ENCODE measurements at regions of chr17 and their contacts with region 1.

Region 1: DNA sequence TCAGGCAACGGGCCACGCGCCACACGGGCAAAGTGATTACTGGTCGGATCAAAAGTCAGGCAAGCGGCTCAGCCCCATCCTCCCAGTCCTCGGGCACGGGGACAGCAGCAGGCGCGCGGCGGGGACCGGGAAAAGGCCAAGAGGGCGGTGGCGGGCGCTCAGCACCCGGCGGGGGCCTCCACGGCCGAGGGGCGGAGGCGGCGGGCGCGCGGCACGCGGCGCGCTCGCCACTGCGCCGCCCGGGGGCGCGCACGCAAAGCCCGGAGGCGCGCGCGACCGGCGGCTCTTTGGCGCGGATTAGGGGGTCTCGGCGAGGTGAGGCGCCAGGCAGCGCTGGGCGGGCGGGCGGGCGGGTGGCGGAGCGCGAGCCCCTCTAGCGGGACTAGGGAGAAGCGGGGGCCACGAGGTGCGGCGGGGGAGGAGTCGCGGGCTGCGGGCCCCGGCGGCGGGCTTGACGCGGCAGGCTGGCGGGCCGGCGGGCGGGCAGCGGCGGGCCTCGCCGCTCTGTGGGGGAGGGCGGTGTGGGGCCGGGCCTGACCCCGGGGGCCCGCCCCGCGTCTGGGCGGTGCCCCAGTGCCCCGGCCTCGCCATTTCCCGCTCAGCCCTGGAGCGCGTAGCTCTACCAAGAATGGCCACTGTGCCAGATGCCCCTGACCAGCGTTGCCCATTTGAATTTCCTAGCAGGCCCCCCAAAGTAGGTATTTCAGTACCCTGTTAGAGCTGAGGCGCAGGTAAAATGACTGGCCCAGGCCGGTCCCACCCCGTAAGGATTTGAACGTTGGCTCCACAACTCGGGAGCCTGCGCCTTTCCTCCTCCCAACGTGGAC is at the starts of genes ACACA and TADA2A:
- DNase-seq: peak; percentile 48 to 73
- ATAC-seq: peak; percentile 84 to 86
- H3K4me3 ChIP-seq: peak within 1 kb of the TSS; percentile 85 to 95 (median 92)
- H3K27ac ChIP-seq: peak within 1 kb of the TSS; percentile 95 to 97 (median 96)
- H3K4me1 ChIP-seq: peaks cover 16 to 22% of the 10 kb centered on the region in 2 donors
- H3K27me3 ChIP-seq: no peaks in the 10 kb centered on the region
- CTCF ChIP-seq: peak in 3 of 5 experiments; percentile 10 to 24 (median 17)
- POLR2A ChIP-seq: peak; percentile 63 to 69
- total RNA-seq, gene ACACA: 13.4 to 28.9 (median 18.9) TPM
- total RNA-seq, gene TADA2A: 9.7 to 18.4 (median 14.8) TPM

Region 2: DNA sequence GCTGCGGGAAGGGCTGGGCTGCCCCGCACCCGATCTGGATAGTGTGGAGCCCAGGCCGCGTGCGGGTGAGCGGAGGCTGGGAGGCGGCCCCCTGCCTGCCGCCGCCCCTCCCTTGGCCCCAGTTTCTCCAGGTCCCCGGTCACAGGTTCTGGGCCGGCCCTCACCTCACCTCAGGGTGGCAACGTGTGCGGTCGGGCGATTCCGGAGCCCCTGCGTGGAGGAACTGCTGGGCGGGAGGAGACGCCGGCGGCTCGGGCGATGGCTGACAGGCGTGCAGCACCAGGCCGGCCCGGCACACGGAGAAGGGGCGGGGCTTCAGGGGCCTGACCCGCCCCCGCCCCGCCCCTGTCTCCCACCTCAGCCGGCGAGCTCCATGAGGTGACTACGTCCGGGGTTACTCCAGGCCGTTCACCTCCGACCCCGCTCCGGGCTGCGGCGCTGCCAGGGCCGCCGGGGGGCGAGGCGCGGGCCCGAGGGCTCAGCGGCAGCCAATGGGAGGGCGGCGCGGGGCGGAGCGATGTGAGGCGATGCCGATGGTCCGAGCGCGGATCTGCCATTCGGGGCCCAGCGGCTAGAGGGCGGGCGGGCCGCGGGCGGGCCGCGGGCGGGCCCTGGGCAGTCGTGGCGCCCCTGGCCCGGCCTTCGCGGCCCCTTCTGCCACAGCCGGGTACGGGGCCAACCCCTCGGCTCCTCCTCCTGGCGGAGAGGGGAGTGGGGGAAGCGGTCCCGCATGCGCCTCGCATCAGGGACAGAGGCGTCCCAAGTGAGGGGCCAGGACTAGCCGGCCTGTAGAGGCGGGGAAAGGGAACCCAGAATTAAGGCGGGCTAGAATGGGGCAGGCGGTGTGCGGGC is 47.8 kb before region 1 on chr17:
- in situ Hi-C with region 1: no loop called
- intact Hi-C with region 1: loop called (anchors 1 kb)
- DNase-seq: peak; percentile 89 to 96
- ATAC-seq: peak; percentile 87
- H3K4me3 ChIP-seq: peak overlapping the region; percentile 86 to 96 (median 94)
- H3K27ac ChIP-seq: peak overlapping the region; percentile 93 to 98 (median 96)
- H3K4me1 ChIP-seq: peaks cover 19 to 22% of the 10 kb centered on the region in 2 donors
- H3K27me3 ChIP-seq: no peaks in the 10 kb centered on the region
- CTCF ChIP-seq: peak in 4 of 5 experiments; percentile 31 to 65 (median 59)
- POLR2A ChIP-seq: peak; percentile 87 to 93

Region 3: DNA sequence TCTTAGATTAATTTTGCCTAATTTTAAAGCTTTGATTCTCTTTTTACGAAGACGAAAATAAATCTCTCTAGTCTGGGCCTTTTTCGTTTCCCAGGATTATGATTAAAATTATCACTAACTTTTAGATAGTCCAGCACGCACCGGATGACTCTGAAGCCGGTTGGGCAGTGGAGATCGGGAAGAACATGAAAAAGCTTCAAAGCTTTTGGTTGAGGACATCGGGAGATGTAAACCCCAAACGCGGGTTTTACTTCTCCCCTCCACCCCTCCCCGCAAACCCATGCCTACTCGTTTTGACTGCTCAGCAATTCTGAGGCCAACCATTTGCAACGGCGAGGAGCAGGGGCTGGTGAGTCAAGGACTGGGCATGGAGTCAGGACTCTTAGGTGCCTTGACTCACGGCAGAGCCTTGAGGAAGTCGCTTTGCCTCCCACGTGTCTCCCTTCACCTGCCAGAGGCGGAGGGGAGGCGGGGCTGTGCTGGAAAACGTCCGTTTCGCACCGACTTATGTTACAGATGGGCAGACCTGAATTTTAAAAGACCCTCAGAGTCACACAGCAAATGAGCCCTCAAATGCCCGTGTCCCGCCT is 81.9 kb after region 1 on chr17:
- in situ Hi-C with region 1: no loop called
- intact Hi-C with region 1: loop called (anchors 1 kb)
- DNase-seq: peak; percentile 92 to 96
- ATAC-seq: peak; percentile 84 to 88
- H3K4me3 ChIP-seq: peak overlapping the region; percentile 79 to 96 (median 88)
- H3K27ac ChIP-seq: peak overlapping the region; percentile 94 to 99 (median 97)
- H3K4me1 ChIP-seq: peaks cover 22 to 30% of the 10 kb centered on the region in 2 donors
- H3K27me3 ChIP-seq: no peaks in the 10 kb centered on the region
- CTCF ChIP-seq: no peak
- POLR2A ChIP-seq: no peak